MCF 10A (cell line): ENCODE measurements at regions of chr2 and their contacts with region 1.

Region 1: DNA sequence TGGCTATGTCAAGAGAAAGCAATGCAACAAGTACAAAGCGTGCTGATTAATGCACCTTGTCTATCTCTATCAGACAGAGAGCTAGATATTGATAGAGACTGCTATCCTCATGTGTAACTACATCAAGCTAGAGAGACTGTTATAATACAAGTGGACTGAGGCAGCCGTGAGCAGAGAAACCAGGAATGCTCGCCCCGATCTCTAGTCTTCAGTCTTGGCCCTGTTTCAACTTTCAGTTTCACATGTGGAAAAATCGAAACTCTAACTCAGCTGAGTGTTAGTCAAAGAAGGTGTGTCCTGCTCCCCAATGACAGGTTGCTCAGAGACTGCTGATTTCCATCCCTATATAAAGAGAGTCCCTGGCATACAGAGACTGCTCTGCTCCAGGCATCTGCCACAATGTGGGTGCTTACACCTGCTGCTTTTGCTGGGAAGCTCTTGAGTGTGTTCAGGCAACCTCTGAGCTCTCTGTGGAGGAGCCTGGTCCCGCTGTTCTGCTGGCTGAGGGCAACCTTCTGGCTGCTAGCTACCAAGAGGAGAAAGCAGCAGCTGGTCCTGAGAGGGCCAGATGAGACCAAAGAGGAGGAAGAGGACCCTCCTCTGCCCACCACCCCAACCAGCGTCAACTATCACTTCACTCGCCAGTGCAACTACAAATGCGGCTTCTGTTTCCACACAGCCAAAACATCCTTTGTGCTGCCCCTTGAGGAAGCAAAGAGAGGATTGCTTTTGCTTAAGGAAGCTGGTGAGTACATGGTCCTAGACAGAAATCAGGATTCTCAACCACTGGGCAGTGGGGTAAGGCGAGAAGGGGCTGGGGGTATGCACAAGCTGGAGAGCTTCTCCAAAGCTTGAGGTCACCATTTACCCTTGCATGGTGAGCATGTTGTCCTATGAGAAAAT is at the start of gene RSAD2:
- DNase-seq: peak; percentile 81
- H3K4me3 Mint-ChIP-seq: peak within 1 kb of the TSS; percentile 66
- H3K27ac Mint-ChIP-seq: no peak within 1 kb of the TSS
- H3K4me1 Mint-ChIP-seq: no peaks in the 10 kb centered on the region
- H3K27me3 Mint-ChIP-seq: peaks cover 53% of the 10 kb centered on the region
- CTCF ChIP-seq: no peak
- total RNA-seq, gene RSAD2: 0.09 TPM in 1 of 2 replicates, not detected in the other

Region 2: DNA sequence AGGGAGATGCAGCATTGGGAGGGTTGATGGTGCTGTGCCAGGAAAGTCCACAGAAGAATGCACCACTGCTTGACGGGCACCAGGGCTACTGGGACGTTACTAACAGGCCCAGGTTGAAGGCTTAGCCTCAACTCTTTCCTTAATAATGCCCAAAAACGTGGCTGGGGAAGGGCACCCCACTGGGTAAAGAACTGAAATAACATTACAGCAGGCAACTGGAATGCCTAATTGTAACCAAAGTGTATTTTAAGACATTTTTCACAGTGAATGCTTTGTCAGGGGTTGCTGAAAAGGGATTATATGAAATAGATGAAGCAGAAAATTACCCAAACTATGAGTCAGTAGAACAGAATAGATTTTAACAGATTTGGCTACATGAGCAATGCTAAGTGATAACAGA is 203.3 kb before region 1 on chr2:
- CTCF ChIA-PET with region 1: no interaction called
- POLR2A ChIA-PET with region 1: no interaction called
- intact Hi-C with region 1: no loop called
- DNase-seq: no peak
- H3K4me3 Mint-ChIP-seq: no peak overlapping the region
- H3K27ac Mint-ChIP-seq: no peak overlapping the region
- H3K4me1 Mint-ChIP-seq: no peaks in the 10 kb centered on the region
- H3K27me3 Mint-ChIP-seq: no peaks in the 10 kb centered on the region
- CTCF ChIP-seq: no peak

Region 3: GRCh38 chr2:6865346-6866274 is 12.0 kb before region 1 on chr2 and contains the start of gene CMPK2:
- CTCF ChIA-PET with region 1: interaction called, 26 read pairs
- POLR2A ChIA-PET with region 1: interaction called, 6 read pairs
- intact Hi-C with region 1: no loop called
- DNase-seq: peak; percentile 36
- H3K4me3 Mint-ChIP-seq: peak within 1 kb of the TSS; percentile 73
- H3K27ac Mint-ChIP-seq: no peak within 1 kb of the TSS
- H3K4me1 Mint-ChIP-seq: peaks cover 7% of the 10 kb centered on the region
- H3K27me3 Mint-ChIP-seq: no peaks in the 10 kb centered on the region
- CTCF ChIP-seq: no peak
- total RNA-seq, gene CMPK2: 0.40 TPM in 1 of 2 replicates, not detected in the other